Prostate gland (tissue), 2 donors: ENCODE measurements at regions of chr2 and their contacts with region 1.

Region 1: DNA sequence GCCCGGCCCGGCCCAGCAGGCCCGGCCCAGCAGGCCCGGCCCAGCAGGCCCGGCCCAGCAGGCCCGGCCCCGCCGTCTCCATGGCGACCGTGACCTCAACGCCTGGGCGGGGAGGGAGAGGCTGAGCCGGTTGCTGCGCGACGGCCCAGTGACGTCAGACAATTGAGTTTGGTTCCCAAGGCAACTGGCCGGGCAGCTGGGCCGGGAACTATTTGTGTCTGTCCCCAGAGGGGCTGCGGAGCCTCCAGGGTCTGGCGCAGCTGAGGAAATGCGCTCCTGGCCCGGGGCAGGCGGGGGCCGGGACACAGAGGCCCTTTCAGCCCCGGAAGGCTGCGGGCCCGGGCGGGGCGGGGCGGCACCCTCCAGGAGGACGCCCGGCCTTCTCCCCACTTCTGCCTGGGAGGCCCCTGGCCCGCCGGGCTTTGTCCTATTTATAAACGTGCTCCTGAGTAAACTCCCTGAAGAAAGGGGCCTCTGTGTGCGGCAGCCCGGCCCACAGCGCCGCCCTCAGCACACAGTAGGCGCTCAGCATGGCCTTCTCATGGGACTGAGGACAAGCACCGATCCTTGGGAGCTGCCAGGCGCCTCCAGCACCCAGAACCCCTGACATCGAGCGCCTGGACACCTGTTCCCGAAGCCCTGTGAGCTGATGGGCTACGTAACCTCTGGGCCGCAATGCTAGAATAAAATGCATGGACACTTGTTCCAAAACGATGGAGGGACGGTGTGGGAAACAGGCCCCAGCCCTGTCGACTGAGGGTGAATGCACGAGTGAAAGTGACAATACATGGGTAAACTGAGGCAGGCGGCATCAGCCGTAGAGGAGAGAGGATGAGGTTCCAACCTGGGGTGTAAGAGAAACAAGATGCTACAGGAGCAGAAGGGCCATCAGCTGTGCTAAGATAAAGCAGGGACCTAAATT is 12.3 kb downstream of the TEX44 start:
- DNase-seq: peak; percentile 98
- H3K4me3 ChIP-seq: peak overlapping the region; percentile 43
- H3K27ac ChIP-seq: peak overlapping the region; percentile 98 to 99
- H3K4me1 ChIP-seq: peaks cover 11% of the 10 kb centered on the region
- H3K27me3 ChIP-seq: no peaks in the 10 kb centered on the region
- CTCF ChIP-seq: peak in 1 of 4 experiments; percentile 13
- POLR2A ChIP-seq: peak; percentile 56

Region 2: GRCh38 chr2:231563378-231563961 is 41.5 kb before region 1 on chr2:
- intact Hi-C with region 1: loop called (anchors 1 kb)
- DNase-seq: no peak
- H3K4me3 ChIP-seq: no peak overlapping the region
- H3K27ac ChIP-seq: no peak overlapping the region
- H3K4me1 ChIP-seq: no peaks in the 10 kb centered on the region
- H3K27me3 ChIP-seq: no peaks in the 10 kb centered on the region
- CTCF ChIP-seq: peak in 3 of 4 experiments; percentile 25 to 53 (median 28)
- POLR2A ChIP-seq: no peak

Region 3: DNA sequence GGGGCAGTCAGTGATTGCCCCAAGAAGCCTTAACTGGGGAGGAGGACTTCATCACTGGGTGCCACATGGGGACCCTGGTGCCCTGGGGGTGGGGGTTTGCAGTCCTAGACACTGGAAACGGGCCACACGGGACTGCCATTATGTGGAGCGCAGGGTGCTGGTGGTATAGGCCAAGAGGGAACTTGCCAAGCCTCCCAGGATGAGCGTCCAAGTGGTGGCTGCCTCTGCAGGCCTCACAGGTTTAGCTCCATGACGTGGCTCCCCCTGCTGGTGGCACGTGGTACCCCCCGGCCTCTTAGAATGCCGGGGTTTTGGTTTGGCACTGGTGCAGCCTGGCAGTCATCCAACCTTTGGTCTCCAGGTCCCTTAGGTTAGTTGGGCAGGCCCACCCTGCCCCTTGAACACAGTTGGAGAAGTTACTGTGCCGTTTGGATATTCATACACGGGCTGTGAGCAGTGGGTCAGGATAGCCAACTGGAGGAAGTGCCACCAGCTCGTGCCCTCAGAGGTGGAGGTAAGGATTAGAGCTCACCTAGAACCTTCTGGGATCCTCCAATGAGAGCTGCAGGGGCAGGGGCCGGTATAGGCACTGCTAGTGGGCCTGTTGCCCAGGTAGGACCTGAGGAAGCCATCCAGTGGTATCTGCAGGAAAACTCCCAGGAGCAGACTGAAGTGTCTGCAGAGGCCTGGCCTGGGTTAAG is 108.9 kb after region 1 on chr2:
- intact Hi-C with region 1: loop called (anchors 2 kb)
- DNase-seq: peak; percentile 86
- H3K4me3 ChIP-seq: no peak overlapping the region
- H3K27ac ChIP-seq: peak overlapping the region; percentile 35 to 70
- H3K4me1 ChIP-seq: peaks cover 5% of the 10 kb centered on the region
- H3K27me3 ChIP-seq: no peaks in the 10 kb centered on the region
- CTCF ChIP-seq: peak; percentile 91 to 97 (median 96)
- POLR2A ChIP-seq: no peak